Panc1 (cell line): ENCODE measurements at regions of chr9 and their contacts with region 1.

Region 1: DNA sequence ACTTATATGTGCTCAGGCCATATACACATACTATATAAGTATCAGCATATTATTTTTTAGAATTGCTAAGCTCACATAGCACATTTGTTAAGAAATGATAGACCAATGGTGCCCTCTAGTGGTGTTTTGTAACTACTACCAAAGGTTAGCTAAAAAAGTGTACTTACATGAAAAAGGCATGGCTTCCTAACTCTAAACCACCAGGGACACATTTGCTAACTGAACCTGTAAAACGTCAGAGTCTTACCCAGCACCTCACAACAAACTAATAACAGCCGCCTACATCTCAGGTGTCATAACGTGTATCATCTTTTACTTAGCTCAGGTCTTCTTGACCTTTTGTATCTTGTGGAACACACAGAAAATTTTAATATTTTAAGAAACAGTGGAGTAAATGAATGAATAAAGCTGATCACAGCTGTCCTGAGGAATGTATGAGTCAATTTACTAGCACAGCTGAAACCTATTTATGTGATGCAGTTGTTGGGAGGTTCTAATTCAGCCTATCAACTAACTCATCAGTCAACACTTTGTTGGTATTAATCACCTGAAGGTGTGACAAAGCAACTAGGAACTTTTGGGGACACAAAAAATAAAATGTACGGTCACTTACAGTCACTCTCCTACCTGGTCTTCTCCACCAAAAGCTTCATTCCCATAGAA is 72.9 kb downstream of the BAAT start:
- DNase-seq: peak; percentile 38
- ATAC-seq: peak; percentile 78
- H3K4me3 ChIP-seq: no peak overlapping the region
- H3K27ac ChIP-seq: no peak overlapping the region
- H3K4me1 ChIP-seq: no peaks in the 10 kb centered on the region
- H3K27me3 ChIP-seq: no peaks in the 10 kb centered on the region
- CTCF ChIP-seq: peak; percentile 42; the same call in 1 of the 2 replicates

Region 2: GRCh38 chr9:100714372-100715099 is 597.4 kb before region 1 on chr9:
- CTCF ChIA-PET with region 1: interaction called, 4 read pairs
- POLR2A ChIA-PET with region 1: no interaction called
- in situ Hi-C with region 1: no loop called
- intact Hi-C with region 1: loop called (anchors 1 kb)
- DNase-seq: peak; percentile 20
- ATAC-seq: peak; percentile 74; the same call in 1 of the 2 replicates
- H3K4me3 ChIP-seq: no peak overlapping the region
- H3K27ac ChIP-seq: no peak overlapping the region
- H3K4me1 ChIP-seq: no peaks in the 10 kb centered on the region
- H3K27me3 ChIP-seq: no peaks in the 10 kb centered on the region
- CTCF ChIP-seq: peak; percentile 85

Region 3: DNA sequence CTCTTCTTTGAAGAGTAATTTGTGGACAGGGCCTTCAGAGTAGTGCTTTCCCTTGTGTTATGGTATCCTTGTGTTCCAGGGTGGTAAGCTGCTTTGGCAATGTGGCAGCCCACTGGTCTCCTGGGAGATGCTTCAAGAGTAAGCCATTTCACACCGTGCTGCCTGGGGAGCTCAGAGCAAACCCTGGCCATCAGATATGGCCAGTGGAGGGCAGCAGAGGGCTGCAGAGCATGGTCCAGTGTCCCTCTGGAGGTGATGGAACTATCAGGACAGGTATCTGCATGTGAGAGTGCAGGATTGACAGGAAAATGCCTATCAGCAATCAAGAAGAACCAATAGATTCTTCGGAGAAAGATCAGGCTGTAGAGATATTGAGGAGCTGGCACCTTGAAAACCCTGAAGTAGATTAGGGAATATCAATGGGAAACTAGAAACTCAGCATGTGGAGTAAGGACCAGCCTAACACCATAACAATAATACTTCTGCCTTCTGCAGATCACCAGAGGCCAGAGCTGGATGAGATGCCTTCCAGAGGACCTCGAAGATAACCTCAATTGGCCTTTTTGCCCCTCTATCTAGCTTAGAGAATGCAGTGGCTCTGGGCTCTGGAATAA is 192.6 kb before region 1 on chr9:
- CTCF ChIA-PET with region 1: no interaction called
- POLR2A ChIA-PET with region 1: no interaction called
- in situ Hi-C with region 1: no loop called
- intact Hi-C with region 1: loop called (anchors 5 kb)
- DNase-seq: no peak
- ATAC-seq: peak; percentile 66; the same call in 1 of the 2 replicates
- H3K4me3 ChIP-seq: no peak overlapping the region
- H3K27ac ChIP-seq: no peak overlapping the region
- H3K4me1 ChIP-seq: no peaks in the 10 kb centered on the region
- H3K27me3 ChIP-seq: no peaks in the 10 kb centered on the region
- CTCF ChIP-seq: peak; percentile 70